Panc1 (cell line): ENCODE measurements at regions of chr12 and their contacts with region 1.

Region 1: DNA sequence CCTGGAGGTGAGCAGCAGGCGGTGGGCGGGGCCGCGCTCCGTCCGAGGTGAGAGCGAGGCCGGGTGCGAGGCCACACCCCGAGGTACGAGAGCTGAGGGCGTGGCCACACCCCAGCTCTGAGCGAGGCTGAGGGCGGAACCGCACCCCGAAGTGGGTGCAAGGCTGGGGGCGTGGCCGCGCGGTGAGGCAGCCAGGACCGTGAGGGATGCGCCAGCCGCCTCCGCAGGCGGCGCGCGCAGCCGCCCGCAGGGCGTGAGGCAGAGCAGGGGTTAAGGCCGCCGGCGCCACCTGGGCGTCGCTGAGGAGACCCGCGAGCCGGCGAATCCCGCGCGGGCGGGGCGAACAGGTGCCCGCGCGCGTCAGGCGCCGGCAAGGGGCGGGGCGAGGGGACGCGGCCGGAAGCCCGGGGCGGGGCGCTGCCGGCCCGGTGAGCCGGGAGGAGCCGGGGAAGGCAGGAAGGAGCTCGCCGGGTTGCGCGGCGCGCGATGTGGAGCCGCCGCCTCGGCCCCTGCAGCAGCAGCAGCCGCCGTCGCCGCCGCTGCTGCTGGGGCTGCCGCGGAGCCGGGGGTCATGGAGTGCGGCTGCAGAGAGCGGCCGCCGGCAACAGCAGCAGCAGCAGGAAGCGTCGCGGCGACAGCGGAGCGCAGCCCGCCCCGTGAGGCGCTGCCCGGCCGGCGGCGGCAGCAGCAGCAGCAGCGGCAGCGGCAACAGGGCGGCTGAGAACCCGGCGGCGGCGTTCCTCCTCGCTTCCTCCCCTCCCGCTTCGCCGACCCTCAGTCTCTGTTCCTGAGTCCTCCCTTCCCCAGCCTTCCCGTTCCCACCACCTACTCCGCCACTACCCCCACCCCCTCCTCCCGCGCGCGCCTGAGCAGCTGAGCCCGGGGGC is at the start of gene BICDL1:
- DNase-seq: peak; percentile 38
- ATAC-seq: peak; percentile 94
- H3K4me3 ChIP-seq: peak within 1 kb of the TSS; percentile 60 to 68
- H3K27ac ChIP-seq: peak within 1 kb of the TSS; percentile 76
- H3K4me1 ChIP-seq: peaks cover 11% of the 10 kb centered on the region
- H3K27me3 ChIP-seq: peaks cover 11% of the 10 kb centered on the region; the same call in 1 of the 2 replicates
- CTCF ChIP-seq: peak; percentile 43; the same call in 1 of the 2 replicates
- total RNA-seq, gene BICDL1: 22.2 TPM

Region 2: DNA sequence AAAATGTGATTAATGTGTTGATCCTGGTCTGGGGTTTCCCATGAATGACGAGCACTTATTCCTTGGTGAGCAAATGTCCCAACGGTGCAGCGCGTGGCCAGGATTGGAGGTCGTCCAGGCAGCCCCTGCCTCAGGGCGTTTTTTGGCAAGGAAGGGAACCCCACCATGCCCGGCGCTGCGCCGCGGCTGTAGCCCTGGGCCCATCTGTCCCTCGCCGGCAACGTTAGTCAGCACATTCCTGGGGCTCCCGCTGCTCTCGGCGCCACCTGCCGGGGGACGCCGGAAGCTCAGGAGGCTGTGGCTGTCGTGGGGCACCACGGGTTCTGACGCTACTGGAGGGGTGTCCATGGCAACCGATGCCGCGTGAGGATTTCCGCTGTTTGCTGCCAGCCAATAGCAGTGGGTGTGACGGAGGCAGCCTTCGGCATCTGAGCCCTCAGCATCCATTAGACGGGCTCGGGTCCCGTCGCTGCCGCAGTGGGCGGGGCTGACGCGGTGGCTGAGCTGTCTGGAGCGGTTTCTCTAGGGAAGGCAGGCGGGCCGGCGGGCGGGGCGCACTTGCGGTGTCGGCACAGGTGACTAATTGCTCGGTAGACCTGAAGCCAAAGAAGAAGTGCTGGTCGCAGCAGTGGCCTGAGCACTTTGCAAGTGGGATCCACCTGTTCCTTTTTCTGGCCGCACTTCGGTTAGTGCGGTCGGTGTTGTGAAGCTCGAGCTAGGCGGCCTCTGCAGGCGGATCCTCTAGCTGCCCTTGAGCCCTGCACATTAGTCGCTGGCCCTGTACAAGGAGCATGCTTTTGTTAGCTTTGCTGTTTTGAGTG is 98.0 kb after region 1 on chr12:
- CTCF ChIA-PET with region 1: interaction called, 3 read pairs
- POLR2A ChIA-PET with region 1: no interaction called
- in situ Hi-C with region 1: no loop called
- intact Hi-C with region 1: loop called (anchors 5 kb)
- DNase-seq: peak; percentile 86
- ATAC-seq: peak; percentile 96
- H3K4me3 ChIP-seq: peak overlapping the region; percentile 45 to 61
- H3K27ac ChIP-seq: peak overlapping the region; percentile 92
- H3K4me1 ChIP-seq: peaks cover 12% of the 10 kb centered on the region
- H3K27me3 ChIP-seq: no peaks in the 10 kb centered on the region
- CTCF ChIP-seq: peak; percentile 98